ENCODE measurements at regions of chr2 and their contacts with region 1.

Region 1: DNA sequence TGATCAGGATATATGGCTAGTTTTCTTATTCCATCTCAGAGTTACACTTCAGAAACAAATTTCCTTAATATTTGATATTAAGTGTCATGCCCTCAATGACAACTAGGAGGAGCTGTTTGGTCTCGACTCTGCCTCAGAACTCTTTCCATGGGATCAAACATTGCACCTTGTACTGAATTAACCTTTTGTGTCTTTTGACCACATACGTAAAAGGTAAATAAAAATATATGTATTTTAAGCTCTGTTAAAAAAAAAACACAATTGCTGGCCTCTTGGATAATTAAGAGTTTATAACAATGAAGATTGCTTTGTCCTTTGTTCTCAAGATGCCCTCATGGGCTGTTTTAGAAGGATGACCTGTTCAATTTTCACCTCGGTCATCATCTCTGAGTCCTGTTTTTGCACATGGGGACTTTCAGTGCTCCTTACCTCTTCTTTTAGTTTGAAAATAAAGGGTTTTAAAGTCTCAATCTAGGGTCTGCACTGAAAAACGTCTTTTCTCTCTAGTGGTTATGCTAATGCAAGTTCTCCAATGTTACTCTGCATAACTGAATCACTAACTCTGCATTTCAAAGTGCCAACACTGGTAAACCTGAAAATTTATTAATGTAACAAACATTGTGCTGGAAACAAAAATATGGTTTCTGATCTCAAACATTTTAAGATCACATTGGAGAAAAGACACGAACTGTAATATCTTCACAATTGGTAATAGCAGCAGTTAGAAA is 18.8 kb upstream of the FN1 start:
- DNase-seq: peak; percentile 31
- CTCF ChIP-seq: peak; percentile 65

Region 2: DNA sequence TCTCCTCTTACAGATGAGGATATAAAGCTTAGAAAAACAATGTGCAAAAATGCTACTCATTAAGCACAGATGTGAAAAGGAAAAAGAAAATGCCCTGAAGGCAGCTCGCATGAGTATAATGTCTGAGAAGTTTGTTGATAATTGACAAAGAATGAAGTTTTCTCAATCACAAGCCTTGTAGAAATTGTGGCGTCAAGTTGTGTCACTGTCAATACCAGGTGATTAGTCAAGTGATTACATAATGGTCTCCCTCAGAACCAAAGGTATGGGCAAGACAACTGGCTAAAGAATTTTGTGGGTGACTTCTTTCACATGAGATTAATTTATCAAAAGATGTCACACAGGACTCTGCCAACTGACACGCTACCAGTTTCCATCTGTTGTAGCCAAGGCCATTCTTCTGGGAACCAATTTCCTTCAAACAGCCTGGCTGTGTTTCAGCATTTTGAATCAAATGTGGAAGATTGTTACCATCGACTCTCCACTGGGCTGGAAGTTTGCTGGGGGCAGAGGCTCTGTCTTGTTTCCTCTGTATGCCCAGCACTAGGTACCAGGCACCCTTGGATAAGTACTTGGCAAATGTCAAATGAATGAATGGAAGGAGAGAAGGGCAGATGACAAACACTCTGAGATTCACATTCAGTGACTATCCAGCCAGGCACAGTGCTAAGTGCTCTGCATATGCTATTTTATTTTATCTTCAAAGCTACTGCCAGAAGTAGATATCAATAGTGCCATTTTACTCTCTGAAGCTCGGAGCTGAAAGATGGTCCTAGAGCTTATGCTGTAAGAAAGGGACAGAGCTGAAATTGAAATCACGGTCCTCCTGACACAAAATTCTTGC is 12.9 kb before region 1 on chr2:
- CTCF ChIA-PET with region 1: interaction called, 11 read pairs
- POLR2A ChIA-PET with region 1: no interaction called
- DNase-seq: no peak
- CTCF ChIP-seq: no peak

Region 3: GRCh38 chr2:215466097-215466909 is 11.6 kb after region 1 on chr2:
- CTCF ChIA-PET with region 1: interaction called, 12 read pairs
- POLR2A ChIA-PET with region 1: no interaction called
- DNase-seq: no peak
- CTCF ChIP-seq: no peak

Region 4: GRCh38 chr2:215920244-215921100 is 465.8 kb after region 1 on chr2:
- CTCF ChIA-PET with region 1: interaction called, 11 read pairs
- POLR2A ChIA-PET with region 1: no interaction called
- DNase-seq: peak; percentile 60
- CTCF ChIP-seq: peak; percentile 75